Caco-2 (cell line): ENCODE measurements at regions of chr20 and their contacts with region 1.

Region 1: DNA sequence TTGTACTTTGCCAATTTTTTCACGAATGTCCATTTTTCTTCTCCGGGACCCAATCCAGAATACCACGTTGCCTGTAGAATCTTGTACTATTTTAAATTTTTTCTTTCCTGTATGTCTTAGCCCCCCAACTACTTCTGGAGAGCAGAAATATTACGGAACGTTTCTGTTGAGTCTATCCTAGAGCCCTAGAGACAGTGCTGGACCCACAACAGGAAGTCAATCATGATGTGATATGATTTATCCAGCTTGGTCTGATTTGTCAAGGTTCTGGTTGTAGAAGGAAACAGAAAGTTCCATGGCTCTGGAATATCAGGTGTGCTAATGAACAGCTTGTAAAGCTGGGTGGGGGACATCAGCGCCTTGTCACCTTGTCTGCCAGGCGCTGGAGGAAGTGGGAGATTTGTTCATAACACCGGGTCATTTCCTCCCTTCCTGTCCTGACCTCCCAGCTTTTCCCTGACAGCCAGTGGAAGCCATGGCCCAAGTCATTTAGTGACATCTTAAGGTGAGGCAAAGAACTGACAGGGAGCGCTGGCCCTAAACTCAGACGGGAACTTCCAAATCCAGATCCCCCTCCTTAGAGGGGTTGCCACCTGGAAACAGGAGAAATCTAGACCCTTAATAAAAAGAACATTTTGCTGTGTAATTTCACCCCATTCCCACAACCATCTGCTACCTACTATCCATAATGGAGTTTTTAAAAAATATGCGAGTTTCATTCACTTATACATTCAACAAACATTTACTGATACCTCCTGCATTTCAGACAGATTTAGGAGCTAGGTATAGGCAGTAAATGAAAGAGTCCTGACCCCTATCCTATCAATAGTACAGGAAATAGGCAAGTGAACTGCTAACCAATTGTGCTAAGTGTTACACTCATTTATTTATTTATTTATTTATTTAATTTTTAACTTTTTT is 130.5 kb downstream of the ZFP64 start:
- DNase-seq: peak; percentile 83 to 86
- H3K4me3 ChIP-seq: no peak overlapping the region
- H3K4me3 Mint-ChIP-seq: no peak overlapping the region
- H3K27ac Mint-ChIP-seq: peak overlapping the region; percentile 12
- H3K4me1 ChIP-seq: peaks cover 8% of the 10 kb centered on the region; the same call in 1 of the 2 replicates
- H3K4me1 Mint-ChIP-seq: peaks cover 8% of the 10 kb centered on the region
- H3K27me3 ChIP-seq: no peaks in the 10 kb centered on the region
- H3K27me3 Mint-ChIP-seq: no peaks in the 10 kb centered on the region
- CTCF ChIP-seq: peak; percentile 95 to 98

Region 2: DNA sequence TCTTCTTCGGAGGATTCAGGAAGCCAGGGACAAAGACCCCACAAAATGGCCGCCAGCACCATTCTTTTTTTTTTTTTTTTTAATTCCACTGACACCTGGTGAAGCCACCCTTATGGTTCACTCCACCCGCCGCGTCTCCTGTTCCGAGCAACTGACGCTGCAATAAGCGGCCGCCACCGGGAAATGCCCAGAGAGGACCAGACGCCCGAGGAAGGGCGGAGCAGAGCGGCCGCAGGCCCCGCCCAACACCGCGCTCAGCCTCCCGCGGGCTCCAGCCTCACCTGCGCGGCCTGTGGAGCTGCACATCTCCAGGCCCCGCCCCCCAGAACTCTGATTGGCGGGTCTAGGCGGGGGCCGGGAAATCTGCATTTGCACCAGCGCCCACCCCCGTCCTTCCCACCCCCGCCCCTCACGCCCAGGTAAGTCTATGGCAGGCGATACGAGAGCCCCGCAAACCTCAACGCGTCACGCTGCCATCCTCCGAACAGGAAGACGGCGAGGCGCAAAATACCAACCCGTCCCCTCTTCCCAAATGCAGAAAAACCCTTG is 294.0 kb before region 1 on chr20:
- CTCF ChIA-PET with region 1: interaction called, 12 read pairs
- POLR2A ChIA-PET with region 1: no interaction called
- intact Hi-C with region 1: loop called (anchors 1 kb)
- DNase-seq: peak; percentile 99
- H3K4me3 ChIP-seq: peak overlapping the region; percentile 95
- H3K4me3 Mint-ChIP-seq: peak overlapping the region; percentile 84
- H3K27ac Mint-ChIP-seq: peak overlapping the region; percentile 80
- H3K4me1 ChIP-seq: peaks cover 15% of the 10 kb centered on the region
- H3K4me1 Mint-ChIP-seq: peaks cover 17% of the 10 kb centered on the region
- H3K27me3 ChIP-seq: no peaks in the 10 kb centered on the region
- H3K27me3 Mint-ChIP-seq: no peaks in the 10 kb centered on the region
- CTCF ChIP-seq: no peak

Region 3: DNA sequence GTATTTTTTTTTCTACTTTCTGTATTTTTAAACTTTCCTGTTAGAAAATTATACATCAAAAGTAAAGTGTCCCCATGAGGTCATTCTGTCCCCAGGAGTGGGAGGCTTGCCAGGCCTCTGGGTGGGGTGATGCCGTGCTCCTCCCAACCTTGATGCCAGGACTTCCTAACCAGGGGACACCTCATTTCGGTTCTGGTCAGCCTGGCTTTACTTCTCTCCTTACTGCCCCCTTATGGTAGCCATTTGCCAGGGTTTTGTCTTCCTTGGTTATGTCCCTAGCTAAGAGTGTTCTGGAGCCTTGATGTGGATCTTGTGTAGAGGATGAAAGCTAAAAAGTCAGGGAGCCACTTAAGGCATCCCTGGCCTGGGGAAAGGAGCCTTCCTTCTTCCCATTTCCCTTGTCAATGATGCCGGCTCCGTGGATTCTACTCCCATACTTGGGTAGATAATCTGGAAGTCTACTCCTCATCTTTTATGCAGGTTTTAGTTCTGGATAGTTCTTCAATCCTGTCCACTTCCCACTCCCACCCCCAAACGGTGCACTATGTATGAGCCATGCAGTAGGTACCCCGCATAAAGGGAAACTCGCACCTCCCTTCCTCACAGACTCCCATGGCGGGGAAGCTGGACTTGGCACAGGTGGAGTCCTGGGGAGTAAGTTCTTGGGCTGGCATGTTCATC is 94.6 kb before region 1 on chr20:
- CTCF ChIA-PET with region 1: no interaction called
- POLR2A ChIA-PET with region 1: no interaction called
- intact Hi-C with region 1: loop called (anchors 5 kb)
- DNase-seq: peak; percentile 87
- H3K4me3 ChIP-seq: no peak overlapping the region
- H3K4me3 Mint-ChIP-seq: no peak overlapping the region
- H3K27ac Mint-ChIP-seq: no peak overlapping the region
- H3K4me1 ChIP-seq: peaks cover 6% of the 10 kb centered on the region; the same call in 1 of the 2 replicates
- H3K4me1 Mint-ChIP-seq: peaks cover 11% of the 10 kb centered on the region
- H3K27me3 ChIP-seq: no peaks in the 10 kb centered on the region
- H3K27me3 Mint-ChIP-seq: no peaks in the 10 kb centered on the region
- CTCF ChIP-seq: peak; percentile 86 to 88

Region 4: DNA sequence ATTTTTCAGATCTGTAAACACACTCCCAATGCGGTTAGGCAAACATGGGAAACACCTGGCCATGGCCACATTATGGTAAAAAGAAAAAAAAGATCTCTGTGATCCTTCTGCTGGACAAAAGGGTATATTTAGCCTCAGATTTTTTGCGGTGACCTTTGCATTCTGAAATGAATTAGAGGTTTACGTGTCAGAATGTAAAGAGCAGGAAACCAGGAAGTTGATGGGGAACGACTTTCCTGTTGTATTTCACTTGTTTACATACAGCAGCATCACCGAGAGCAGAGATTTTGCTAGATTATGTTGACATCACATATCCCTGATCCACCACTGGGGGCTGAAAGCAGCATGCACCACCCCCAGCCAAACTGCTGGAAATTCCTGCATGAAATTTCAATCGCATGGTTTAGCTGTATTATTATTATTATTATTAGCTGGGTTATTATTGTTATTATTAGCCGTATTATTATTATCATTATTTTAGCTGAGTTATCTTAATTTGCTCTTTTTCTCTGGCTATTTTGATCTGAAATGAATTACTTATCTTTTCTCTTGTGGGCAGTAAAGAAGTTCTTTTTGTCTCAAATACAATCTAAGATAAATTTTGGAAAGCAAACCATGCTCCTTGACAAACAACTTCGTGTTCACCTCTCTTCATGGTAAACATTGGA is 58.9 kb before region 1 on chr20:
- CTCF ChIA-PET with region 1: interaction called, 4 read pairs
- POLR2A ChIA-PET with region 1: no interaction called
- intact Hi-C with region 1: loop called (anchors 2 kb)
- DNase-seq: peak; percentile 59 to 70
- H3K4me3 ChIP-seq: 0 out of 2 replicates have a peak overlapping the region, but pooled peaks have one; percentile 3
- H3K4me3 Mint-ChIP-seq: peak overlapping the region; percentile 55
- H3K27ac Mint-ChIP-seq: peak overlapping the region; percentile 19
- H3K4me1 ChIP-seq: peaks cover 7% of the 10 kb centered on the region
- H3K4me1 Mint-ChIP-seq: peaks cover 16% of the 10 kb centered on the region
- H3K27me3 ChIP-seq: no peaks in the 10 kb centered on the region
- H3K27me3 Mint-ChIP-seq: no peaks in the 10 kb centered on the region
- CTCF ChIP-seq: peak; percentile 68 to 79

Region 5: DNA sequence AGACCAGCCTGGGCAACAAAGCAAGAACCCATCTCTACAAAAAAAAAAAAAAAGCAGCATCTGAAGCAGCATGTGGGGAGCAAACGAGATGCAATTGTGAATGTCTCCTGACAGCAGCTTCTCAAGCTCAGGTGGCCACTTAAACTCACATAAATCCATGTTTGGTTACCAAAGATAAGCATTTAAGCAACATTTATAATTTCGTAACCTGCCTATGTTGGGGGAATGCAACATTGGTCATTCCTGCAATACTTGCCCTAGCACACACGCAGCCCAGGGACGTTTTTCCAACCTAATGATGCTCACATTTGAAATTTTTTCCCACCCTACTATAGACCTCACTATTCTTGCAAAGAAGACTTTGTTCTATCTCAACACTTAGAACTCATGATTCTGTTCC is 17.2 kb after region 1 on chr20:
- CTCF ChIA-PET with region 1: interaction called, 10 read pairs
- POLR2A ChIA-PET with region 1: no interaction called
- intact Hi-C with region 1: no loop called
- DNase-seq: peak in 1 of 2 experiments; percentile 51
- H3K4me3 ChIP-seq: no peak overlapping the region
- H3K4me3 Mint-ChIP-seq: no peak overlapping the region
- H3K27ac Mint-ChIP-seq: no peak overlapping the region
- H3K4me1 ChIP-seq: peaks cover 12% of the 10 kb centered on the region
- H3K4me1 Mint-ChIP-seq: peaks cover 18% of the 10 kb centered on the region
- H3K27me3 ChIP-seq: no peaks in the 10 kb centered on the region
- H3K27me3 Mint-ChIP-seq: no peaks in the 10 kb centered on the region
- CTCF ChIP-seq: no peak